Body of pancreas (tissue), 4 donors: ENCODE measurements at regions of chr10 and their contacts with region 1.

Region 1: DNA sequence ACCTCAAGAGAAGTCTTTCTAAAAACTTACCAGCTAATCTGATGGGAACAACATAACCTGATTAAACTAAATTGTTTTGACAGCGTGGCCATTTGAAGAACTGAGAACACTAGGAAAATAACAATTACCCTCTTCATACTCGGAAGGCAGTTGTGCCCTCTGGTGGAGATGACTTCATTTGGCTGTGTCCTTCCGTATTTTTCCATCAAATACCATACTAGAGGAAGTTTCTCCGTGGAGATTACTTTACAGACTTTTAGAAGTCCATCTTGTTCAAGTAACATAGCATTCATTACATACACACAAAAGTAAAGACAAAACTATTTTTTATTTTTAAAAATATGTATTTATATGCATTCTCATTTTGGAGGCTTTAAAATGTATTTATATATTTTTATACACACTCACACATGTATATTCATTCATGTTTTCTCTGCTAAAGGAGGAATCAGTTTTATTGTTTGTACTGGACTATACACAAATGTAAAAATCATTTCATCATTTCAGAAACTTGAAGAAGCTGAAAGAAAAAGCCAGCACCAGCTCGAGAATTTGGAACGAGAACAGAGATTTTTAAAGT is 25.2 kb downstream of the SMNDC1 start:
- DNase-seq: peak; percentile 60 to 78 (median 72)
- ATAC-seq: peak; percentile 84
- H3K4me3 ChIP-seq: no peak overlapping the region
- H3K27ac ChIP-seq: peak overlapping the region in 2 of 4 donors; percentile 5 to 45
- H3K4me1 ChIP-seq: peaks cover 13% of the 10 kb centered on the region
- H3K27me3 ChIP-seq: no peaks in the 10 kb centered on the region
- CTCF ChIP-seq: peak; percentile 62 to 92 (median 86)
- POLR2A ChIP-seq: no peak

Region 2: DNA sequence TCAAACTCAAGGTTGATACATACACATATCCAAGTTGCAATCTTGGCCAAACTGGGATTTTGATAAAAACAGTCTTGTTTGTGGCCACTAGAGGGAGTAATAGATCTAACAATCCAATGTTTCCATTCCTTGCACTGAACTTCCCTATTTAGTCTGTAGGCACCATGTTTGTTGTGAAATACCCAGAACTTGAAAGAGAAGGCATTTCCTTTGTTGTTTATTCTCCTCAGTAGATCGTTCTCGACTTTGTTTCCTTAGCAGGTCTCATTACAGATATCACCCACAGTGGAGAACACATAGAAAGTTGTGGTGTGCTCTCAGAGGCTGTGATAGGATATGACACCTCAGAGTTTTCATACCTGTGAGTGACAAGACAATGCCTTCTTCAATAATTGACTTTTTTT is 142.4 kb before region 1 on chr10:
- intact Hi-C with region 1: loop called (anchors 5 kb)
- DNase-seq: peak in 1 of 4 donors; percentile 37
- ATAC-seq: peak; percentile 91
- H3K4me3 ChIP-seq: no peak overlapping the region
- H3K27ac ChIP-seq: peak overlapping the region in 3 of 4 donors; percentile 35 to 73 (median 45)
- H3K4me1 ChIP-seq: peaks cover 18% of the 10 kb centered on the region
- H3K27me3 ChIP-seq: no peaks in the 10 kb centered on the region
- CTCF ChIP-seq: peak; percentile 58 to 96 (median 93)
- POLR2A ChIP-seq: no peak

Region 3: DNA sequence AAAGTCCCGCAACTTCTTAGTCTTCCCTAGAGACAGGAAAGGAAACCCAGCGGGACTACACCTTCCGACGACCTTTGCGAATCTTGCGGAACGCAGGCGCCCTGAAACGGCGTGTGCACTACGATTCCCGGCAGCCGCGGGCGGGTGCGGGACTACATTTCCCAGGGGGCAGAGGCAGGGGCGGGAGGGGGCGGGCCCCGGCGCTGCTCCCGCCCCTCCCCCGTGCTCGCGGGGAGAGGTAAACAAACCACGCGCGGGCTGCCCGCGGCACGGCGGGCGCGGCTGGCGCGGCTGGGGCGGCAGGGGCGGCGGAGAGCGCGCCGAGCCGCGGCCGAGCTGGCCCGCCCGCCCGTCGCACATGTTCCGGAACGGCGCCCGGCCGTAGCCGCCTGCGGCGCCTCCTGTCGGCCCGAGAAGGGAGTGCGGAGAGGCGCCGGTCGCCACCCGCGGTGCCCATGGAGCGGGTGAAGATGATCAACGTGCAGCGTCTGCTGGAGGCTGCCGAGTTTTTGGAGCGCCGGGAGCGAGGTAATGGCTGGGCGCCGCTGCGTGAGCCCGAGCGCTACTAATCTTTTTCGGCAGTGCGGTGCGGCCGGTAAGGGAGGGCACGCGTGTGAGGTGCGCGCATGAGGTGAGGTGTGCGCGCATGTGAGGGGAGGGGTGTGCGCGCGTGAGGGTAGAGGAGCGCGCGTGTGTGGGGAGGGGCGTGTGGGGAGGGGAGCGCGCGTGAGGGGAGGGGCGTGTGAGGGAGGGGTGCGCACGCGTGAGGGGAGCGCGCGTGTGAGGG is 53.5 kb before region 1 on chr10:
- intact Hi-C with region 1: loop called (anchors 10 kb)
- DNase-seq: peak; percentile 92 to 93 (median 92)
- ATAC-seq: peak; percentile 81
- H3K4me3 ChIP-seq: peak overlapping the region; percentile 56 to 93
- H3K27ac ChIP-seq: peak overlapping the region; percentile 91 to 98 (median 93)
- H3K4me1 ChIP-seq: peaks cover 28% of the 10 kb centered on the region
- H3K27me3 ChIP-seq: no peaks in the 10 kb centered on the region
- CTCF ChIP-seq: peak; percentile 59 to 96 (median 80)
- POLR2A ChIP-seq: peak in 2 of 3 donors; percentile 75